Activated CD8-positive, alpha-beta T cell treated with anti-CD3 and anti-CD28 coated beads for 36 hours (primary cell): ENCODE measurements at regions of chr2 and their contacts with region 1.

Region 1: GRCh38 chr2:64609227-64609941 is 44.3 kb downstream of the SERTAD2 start:
- DNase-seq: peak; percentile 60
- ATAC-seq: peak; percentile 60
- H3K4me3 Mint-ChIP-seq: peak overlapping the region; percentile 60
- H3K27ac Mint-ChIP-seq: peak overlapping the region; percentile 59
- H3K4me1 Mint-ChIP-seq: peaks cover 22% of the 10 kb centered on the region
- H3K27me3 Mint-ChIP-seq: no peaks in the 10 kb centered on the region
- CTCF ChIP-seq: peak; percentile 26

Region 2: DNA sequence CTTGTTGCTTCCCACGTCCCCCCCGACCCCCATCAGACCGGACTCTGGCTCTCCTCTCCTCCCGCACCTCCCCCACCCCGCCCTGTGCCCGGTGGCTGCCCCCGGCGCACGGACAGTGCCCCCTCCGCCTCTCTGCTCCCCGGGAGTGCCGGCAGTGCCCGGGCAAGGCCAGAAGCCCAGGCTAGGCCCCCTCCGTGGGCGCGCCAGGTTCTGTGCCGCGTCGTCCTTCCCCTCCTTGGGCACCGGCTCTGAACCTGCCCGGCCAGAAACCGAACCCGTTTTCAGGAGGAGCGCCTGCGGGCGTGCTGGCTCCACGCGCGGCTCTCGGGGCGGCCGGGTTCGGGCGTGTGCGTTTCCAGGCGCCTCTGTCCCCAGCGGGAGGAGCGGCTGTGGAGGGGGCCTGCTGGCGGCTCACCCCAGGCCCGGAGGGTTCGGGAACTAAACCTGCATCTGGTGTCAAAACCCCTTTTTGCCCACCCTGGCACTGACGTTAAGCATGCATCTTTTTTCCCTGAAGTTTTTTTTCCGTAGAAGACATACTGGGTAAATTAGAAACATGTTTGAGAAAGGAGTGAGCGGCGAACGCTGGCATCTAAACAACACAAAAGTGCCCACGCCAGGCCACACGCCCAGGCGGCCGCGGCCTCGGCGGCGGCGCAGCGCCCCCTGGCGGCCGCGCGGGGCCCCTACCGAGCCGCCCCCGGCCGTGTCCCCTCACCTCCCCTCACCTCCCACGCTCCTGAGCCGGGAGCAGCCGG is 255.9 kb after region 1 on chr2:
- CTCF ChIA-PET with region 1: interaction called, 19 read pairs
- POLR2A ChIA-PET with region 1: interaction called, 4 read pairs
- intact Hi-C with region 1: no loop called
- DNase-seq: peak; percentile 72
- ATAC-seq: peak; percentile 68
- H3K4me3 Mint-ChIP-seq: peak overlapping the region; percentile 68
- H3K27ac Mint-ChIP-seq: peak overlapping the region; percentile 35
- H3K4me1 Mint-ChIP-seq: peaks cover 3% of the 10 kb centered on the region
- H3K27me3 Mint-ChIP-seq: peaks cover 6% of the 10 kb centered on the region
- CTCF ChIP-seq: peak; percentile 94

Region 3: GRCh38 chr2:65432227-65433190 is 823.1 kb after region 1 on chr2 and contains the start of gene SPRED2:
- CTCF ChIA-PET with region 1: no interaction called
- POLR2A ChIA-PET with region 1: no interaction called
- intact Hi-C with region 1: no loop called
- DNase-seq: peak; percentile 84
- ATAC-seq: peak; percentile 46
- H3K4me3 Mint-ChIP-seq: peak within 1 kb of the TSS; percentile 88
- H3K27ac Mint-ChIP-seq: peak within 1 kb of the TSS; percentile 81
- H3K4me1 Mint-ChIP-seq: peaks cover 18% of the 10 kb centered on the region
- H3K27me3 Mint-ChIP-seq: peaks cover 44% of the 10 kb centered on the region
- CTCF ChIP-seq: no peak
- total RNA-seq, gene SPRED2: 5.9 to 6.7 TPM